CD4-positive, alpha-beta T cell (primary cell): ENCODE measurements at regions of chr1 and their contacts with region 1.

Region 1: GRCh38 chr1:41919764-41920397 is 1.2 kb upstream of the HIVEP3 start:
- DNase-seq: peak; percentile 56 to 94 (median 72)
- ATAC-seq: peak; percentile 83
- H3K4me3 ChIP-seq: peak overlapping the region; percentile 62
- H3K4me3 Mint-ChIP-seq: peak overlapping the region; percentile 84
- H3K27ac ChIP-seq: peak overlapping the region; percentile 57 to 60
- H3K27ac Mint-ChIP-seq: peak overlapping the region; percentile 95
- H3K4me1 ChIP-seq: peaks cover 51% of the 10 kb centered on the region
- H3K4me1 Mint-ChIP-seq: peaks cover 63% of the 10 kb centered on the region
- H3K27me3 ChIP-seq: no peaks in the 10 kb centered on the region
- H3K27me3 Mint-ChIP-seq: no peaks in the 10 kb centered on the region
- CTCF ChIP-seq: no peak

Region 2: GRCh38 chr1:41802532-41803501 is 117.1 kb before region 1 on chr1:
- CTCF ChIA-PET with region 1: no interaction called
- POLR2A ChIA-PET with region 1: interaction called, 10 read pairs
- intact Hi-C with region 1: no loop called
- DNase-seq: peak in 12 of 14 experiments; percentile 12 to 77 (median 23)
- ATAC-seq: peak; percentile 65
- H3K4me3 ChIP-seq: no peak overlapping the region
- H3K4me3 Mint-ChIP-seq: peak overlapping the region; percentile 54
- H3K27ac ChIP-seq: peak overlapping the region; percentile 44 to 77
- H3K27ac Mint-ChIP-seq: peak overlapping the region; percentile 90
- H3K4me1 ChIP-seq: peaks cover 84% of the 10 kb centered on the region
- H3K4me1 Mint-ChIP-seq: peaks cover 78% of the 10 kb centered on the region
- H3K27me3 ChIP-seq: no peaks in the 10 kb centered on the region
- H3K27me3 Mint-ChIP-seq: no peaks in the 10 kb centered on the region
- CTCF ChIP-seq: no peak

Region 3: GRCh38 chr1:41868599-41868998 is 51.3 kb before region 1 on chr1:
- CTCF ChIA-PET with region 1: no interaction called
- POLR2A ChIA-PET with region 1: no interaction called
- intact Hi-C with region 1: no loop called
- DNase-seq: peak in 4 of 14 experiments; percentile 14 to 58 (median 54)
- ATAC-seq: peak; percentile 37
- H3K4me3 ChIP-seq: no peak overlapping the region
- H3K4me3 Mint-ChIP-seq: no peak overlapping the region
- H3K27ac ChIP-seq: no peak overlapping the region
- H3K27ac Mint-ChIP-seq: no peak overlapping the region
- H3K4me1 ChIP-seq: peaks cover 20% of the 10 kb centered on the region
- H3K4me1 Mint-ChIP-seq: peaks cover 11% of the 10 kb centered on the region
- H3K27me3 ChIP-seq: no peaks in the 10 kb centered on the region
- H3K27me3 Mint-ChIP-seq: no peaks in the 10 kb centered on the region
- CTCF ChIP-seq: no peak

Region 4: GRCh38 chr1:41898191-41898713 is 21.6 kb before region 1 on chr1:
- CTCF ChIA-PET with region 1: no interaction called
- POLR2A ChIA-PET with region 1: interaction called, 108 read pairs
- intact Hi-C with region 1: loop called in 1 of 2 experiments (anchors 5 kb)
- DNase-seq: peak; percentile 50 to 95 (median 74)
- ATAC-seq: peak; percentile 96
- H3K4me3 ChIP-seq: peak overlapping the region; percentile 27
- H3K4me3 Mint-ChIP-seq: peak overlapping the region; percentile 78
- H3K27ac ChIP-seq: peak overlapping the region; percentile 59 to 78
- H3K27ac Mint-ChIP-seq: peak overlapping the region; percentile 98
- H3K4me1 ChIP-seq: peaks cover 98% of the 10 kb centered on the region
- H3K4me1 Mint-ChIP-seq: peaks cover 91% of the 10 kb centered on the region
- H3K27me3 ChIP-seq: no peaks in the 10 kb centered on the region
- H3K27me3 Mint-ChIP-seq: no peaks in the 10 kb centered on the region
- CTCF ChIP-seq: no peak

Region 5: GRCh38 chr1:41905093-41905675 is 14.7 kb before region 1 on chr1:
- CTCF ChIA-PET with region 1: interaction called, 5 read pairs
- POLR2A ChIA-PET with region 1: interaction called, 17 read pairs
- intact Hi-C with region 1: no loop called
- DNase-seq: no peak
- ATAC-seq: no peak
- H3K4me3 ChIP-seq: no peak overlapping the region
- H3K4me3 Mint-ChIP-seq: no peak overlapping the region
- H3K27ac ChIP-seq: no peak overlapping the region
- H3K27ac Mint-ChIP-seq: no peak overlapping the region
- H3K4me1 ChIP-seq: peaks cover 61% of the 10 kb centered on the region
- H3K4me1 Mint-ChIP-seq: peaks cover 70% of the 10 kb centered on the region
- H3K27me3 ChIP-seq: no peaks in the 10 kb centered on the region
- H3K27me3 Mint-ChIP-seq: no peaks in the 10 kb centered on the region
- CTCF ChIP-seq: no peak

Region 6: DNA sequence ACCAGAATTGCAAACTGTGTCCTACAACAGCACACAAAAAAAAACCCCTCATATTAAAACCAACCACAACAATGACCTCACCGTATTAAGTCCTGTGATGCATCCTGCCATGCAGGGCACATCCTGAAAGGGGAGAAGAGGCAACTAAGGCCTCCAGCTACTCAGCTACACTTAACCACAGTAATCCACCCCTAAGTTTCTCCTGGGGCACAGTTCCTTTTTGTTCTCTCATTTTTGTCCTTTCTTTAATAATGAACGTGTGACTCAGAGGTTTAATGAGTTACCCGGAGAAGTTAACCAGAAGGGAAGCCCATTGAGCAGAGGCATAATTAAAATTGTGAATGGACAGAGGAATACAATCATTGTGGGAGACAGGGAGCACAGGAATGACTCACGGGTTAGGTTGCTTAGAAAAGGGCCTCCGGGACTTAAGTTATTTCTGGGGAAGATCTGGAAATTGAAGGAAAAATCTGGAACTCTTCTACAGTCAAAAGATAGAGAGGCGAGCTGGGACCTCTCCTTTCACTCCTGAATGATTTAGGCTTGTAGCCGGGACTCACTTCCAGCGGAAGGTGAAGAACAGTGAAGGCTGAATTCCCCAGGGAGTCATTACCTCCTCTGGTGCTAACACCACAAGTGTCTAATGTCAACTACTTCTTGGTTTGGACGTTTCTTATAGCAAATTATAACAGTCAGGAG is 35.7 kb after region 1 on chr1:
- CTCF ChIA-PET with region 1: no interaction called
- POLR2A ChIA-PET with region 1: no interaction called
- intact Hi-C with region 1: no loop called
- DNase-seq: peak in 2 of 14 experiments; percentile 2 to 3
- ATAC-seq: no peak
- H3K4me3 ChIP-seq: no peak overlapping the region
- H3K4me3 Mint-ChIP-seq: no peak overlapping the region
- H3K27ac ChIP-seq: no peak overlapping the region
- H3K27ac Mint-ChIP-seq: no peak overlapping the region
- H3K4me1 ChIP-seq: peaks cover 4% of the 10 kb centered on the region
- H3K4me1 Mint-ChIP-seq: peaks cover 15% of the 10 kb centered on the region
- H3K27me3 ChIP-seq: no peaks in the 10 kb centered on the region
- H3K27me3 Mint-ChIP-seq: no peaks in the 10 kb centered on the region
- CTCF ChIP-seq: no peak

Region 7: GRCh38 chr1:42157667-42158066 is 237.8 kb after region 1 on chr1:
- CTCF ChIA-PET with region 1: no interaction called
- POLR2A ChIA-PET with region 1: no interaction called
- intact Hi-C with region 1: no loop called
- DNase-seq: peak in 2 of 14 experiments; percentile 14 to 20
- ATAC-seq: no peak
- H3K4me3 ChIP-seq: no peak overlapping the region
- H3K4me3 Mint-ChIP-seq: no peak overlapping the region
- H3K27ac ChIP-seq: no peak overlapping the region
- H3K27ac Mint-ChIP-seq: no peak overlapping the region
- H3K4me1 ChIP-seq: peaks cover 3% of the 10 kb centered on the region
- H3K4me1 Mint-ChIP-seq: peaks cover 7% of the 10 kb centered on the region
- H3K27me3 ChIP-seq: no peaks in the 10 kb centered on the region
- H3K27me3 Mint-ChIP-seq: no peaks in the 10 kb centered on the region
- CTCF ChIP-seq: no peak